Activated T-helper 1 cell treated with anti-CD3 and anti-CD28 coated beads, Interleukin-12 subunit alpha, Interleukin-12 subunit beta, Interleukin-2, Interleukin-4 antibody, amounts not matched to agents 30 ng/mL and 10 ng/mL and 1 ng/mL, durations not matched to agents 14 hours and 24 hours and 36 hours (primary cell): ENCODE measurements at regions of chr12 and their contacts with region 1.

Region 1: DNA sequence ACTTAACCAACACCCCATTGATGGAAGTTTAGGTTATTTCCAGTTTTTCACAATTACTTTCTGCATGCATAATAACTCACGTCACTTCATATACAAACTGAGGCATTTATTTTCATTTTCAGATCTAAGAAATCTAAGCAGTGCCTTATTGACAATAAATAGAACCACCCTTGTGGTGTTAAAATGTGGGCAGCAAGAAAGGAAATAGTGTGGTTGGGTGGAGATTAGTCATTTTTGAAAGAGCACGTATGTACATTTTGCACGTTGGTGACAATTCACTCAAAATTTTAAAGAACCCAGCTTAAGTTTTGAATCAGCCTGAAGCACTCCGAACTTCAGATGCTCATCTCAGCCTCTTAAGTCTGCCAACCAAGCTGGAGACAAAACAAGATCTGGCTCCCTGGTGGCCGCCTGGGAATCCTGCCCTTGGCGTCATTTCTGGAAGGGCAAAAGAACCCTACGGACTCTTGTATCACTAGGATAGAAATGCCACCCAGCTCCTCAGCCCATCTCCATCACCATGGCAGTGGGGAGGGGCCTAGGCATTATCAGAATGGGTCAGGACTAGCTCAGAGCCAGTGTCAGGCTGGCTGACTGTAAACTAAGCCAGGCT is 89.5 kb upstream of the BCL2L14 start:
- DNase-seq: peak; percentile 73
- H3K4me3 Mint-ChIP-seq: peak overlapping the region; percentile 36
- H3K27ac Mint-ChIP-seq: peak overlapping the region; percentile 96
- H3K4me1 Mint-ChIP-seq: peaks cover 62% of the 10 kb centered on the region
- H3K27me3 Mint-ChIP-seq: no peaks in the 10 kb centered on the region

Region 2: GRCh38 chr12:11136075-11136474 is 845.2 kb before region 1 on chr12:
- intact Hi-C with region 1: no loop called
- DNase-seq: no peak
- H3K4me3 Mint-ChIP-seq: no peak overlapping the region
- H3K27ac Mint-ChIP-seq: peak overlapping the region; percentile 0
- H3K4me1 Mint-ChIP-seq: peaks cover 22% of the 10 kb centered on the region
- H3K27me3 Mint-ChIP-seq: no peaks in the 10 kb centered on the region

Region 3: DNA sequence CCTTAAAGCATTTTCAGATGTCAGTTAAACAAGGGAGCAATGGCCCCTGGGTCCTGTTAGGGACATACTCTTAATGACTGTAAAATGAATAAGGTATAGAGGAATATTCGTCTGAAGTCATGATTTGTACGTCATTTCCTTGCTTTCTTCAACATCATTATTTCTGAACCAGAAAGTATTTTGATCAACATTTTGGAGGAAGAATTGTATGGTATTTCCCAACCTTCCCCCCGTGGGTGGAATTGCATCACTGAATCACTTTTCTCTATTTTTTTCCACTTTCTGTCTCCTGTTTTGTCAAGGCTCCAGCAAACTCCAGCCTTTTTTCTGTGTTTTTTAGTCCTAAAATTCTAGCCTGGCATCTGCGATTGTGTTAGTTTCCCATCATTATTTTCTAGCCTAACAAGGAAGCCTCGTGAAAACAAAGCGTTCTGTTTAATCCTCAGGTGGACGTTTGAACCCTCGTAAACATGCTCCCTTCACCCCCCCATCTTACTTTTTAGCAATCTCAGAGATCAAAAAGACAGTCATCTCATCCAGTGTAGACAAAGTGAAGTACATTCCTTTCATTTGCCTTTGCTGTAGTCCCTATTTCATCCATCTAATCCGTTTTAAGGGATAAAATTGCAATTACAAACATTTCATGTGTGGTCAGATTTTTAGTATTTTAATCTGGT is 269.4 kb before region 1 on chr12:
- intact Hi-C with region 1: loop called (anchors 1 kb)
- DNase-seq: no peak
- H3K4me3 Mint-ChIP-seq: no peak overlapping the region
- H3K27ac Mint-ChIP-seq: peak overlapping the region; percentile 75
- H3K4me1 Mint-ChIP-seq: peaks cover 76% of the 10 kb centered on the region
- H3K27me3 Mint-ChIP-seq: no peaks in the 10 kb centered on the region

Region 4: GRCh38 chr12:11958221-11959091 is 22.8 kb before region 1 on chr12:
- intact Hi-C with region 1: loop called (anchors 1 kb)
- DNase-seq: peak; percentile 55
- H3K4me3 Mint-ChIP-seq: peak overlapping the region; percentile 29
- H3K27ac Mint-ChIP-seq: peak overlapping the region; percentile 89
- H3K4me1 Mint-ChIP-seq: peaks cover 76% of the 10 kb centered on the region
- H3K27me3 Mint-ChIP-seq: no peaks in the 10 kb centered on the region

Region 5: GRCh38 chr12:11991604-11992003 is 10.4 kb after region 1 on chr12:
- intact Hi-C with region 1: loop called (anchors 1 kb)
- DNase-seq: no peak
- H3K4me3 Mint-ChIP-seq: no peak overlapping the region
- H3K27ac Mint-ChIP-seq: no peak overlapping the region
- H3K4me1 Mint-ChIP-seq: peaks cover 31% of the 10 kb centered on the region
- H3K27me3 Mint-ChIP-seq: no peaks in the 10 kb centered on the region

Region 6: DNA sequence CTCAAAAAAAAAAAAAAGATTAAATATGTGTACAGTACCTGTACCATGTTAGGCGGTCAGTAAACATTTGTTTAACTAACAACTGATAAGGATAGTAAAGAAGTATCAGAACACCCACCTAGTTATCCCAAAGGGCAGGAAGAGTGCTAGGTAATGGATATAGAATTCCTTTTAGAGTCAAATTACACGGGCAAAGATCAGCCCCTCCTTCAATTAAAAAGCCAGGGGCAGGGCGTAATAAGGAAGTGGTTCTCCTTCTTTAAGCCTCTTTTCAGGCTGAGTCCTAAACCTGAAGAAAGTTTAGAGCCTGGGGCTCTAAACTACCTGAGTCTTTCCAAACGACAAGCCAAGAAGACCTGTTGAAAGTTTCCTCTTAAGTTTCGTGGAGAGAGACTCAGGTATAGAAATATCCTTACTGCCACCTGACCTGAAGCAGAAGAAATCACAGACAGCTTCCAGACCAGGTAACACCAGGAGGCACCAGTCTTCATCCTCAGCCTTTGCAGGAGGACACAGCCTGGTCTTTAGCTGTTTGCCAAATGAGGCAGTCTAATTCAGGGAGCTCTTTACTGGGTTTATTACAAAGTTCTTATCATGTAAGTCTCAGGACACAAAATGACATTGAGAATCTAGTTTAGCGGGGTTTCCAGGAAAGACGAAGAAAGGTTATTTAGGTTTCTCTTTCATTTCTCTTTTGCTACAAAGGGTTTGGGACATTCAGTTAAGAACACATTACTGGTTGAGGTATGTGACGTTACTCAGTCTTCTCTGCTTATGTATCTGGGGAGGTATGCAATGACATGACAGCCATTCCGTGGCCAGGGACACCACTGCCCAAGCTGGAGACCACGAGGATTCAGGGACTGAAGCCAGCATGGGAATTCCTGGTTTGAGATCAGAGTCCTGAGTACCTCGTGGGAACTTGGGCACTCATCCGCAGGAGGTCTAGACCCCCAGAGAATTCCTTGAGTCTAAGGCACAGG is 89.7 kb after region 1 on chr12 and contains the start of gene BCL2L14:
- intact Hi-C with region 1: loop called (anchors 2 kb)
- DNase-seq: peak; percentile 8
- H3K4me3 Mint-ChIP-seq: peak within 1 kb of the TSS; percentile 88
- H3K27ac Mint-ChIP-seq: peak within 1 kb of the TSS; percentile 94
- H3K4me1 Mint-ChIP-seq: peaks cover 49% of the 10 kb centered on the region
- H3K27me3 Mint-ChIP-seq: peaks cover 3% of the 10 kb centered on the region
- total RNA-seq, gene BCL2L14: 10.4 and 11.0 TPM in 2 replicates